Common myeloid progenitor, CD34-positive (primary cell): ENCODE measurements at regions of chr3 and their contacts with region 1.

Region 1: DNA sequence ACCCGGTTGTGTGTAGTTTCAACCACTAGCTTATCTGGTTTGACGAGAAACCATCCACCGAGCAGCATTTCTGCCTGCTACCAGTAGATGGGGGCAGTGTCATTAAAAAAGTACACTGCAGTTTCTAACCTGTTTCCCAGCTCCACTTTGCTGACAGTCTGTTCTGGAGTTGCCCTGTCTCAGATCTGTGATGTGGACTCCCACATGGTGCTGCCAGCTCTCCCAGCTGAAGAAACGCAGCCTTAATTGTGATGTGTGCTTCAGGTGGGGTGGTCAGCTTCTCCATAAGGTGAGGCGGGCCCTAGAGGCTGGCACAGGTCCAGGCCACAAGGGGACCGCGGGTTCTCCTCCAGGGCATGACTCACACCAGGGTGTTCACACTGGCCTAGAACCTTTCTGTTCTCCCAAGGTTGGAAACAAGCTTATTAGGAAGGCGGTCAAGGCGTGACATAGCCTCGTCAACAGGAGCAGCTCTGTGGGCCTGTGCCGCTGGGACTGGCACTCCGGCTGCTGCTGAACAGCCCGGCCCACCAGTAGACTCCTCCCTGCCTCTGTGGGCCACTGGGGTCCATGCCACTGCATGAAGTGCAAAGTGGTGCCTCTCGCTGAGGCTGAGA is 2.9 kb upstream of the FAM43A start:
- DNase-seq: peak; percentile 86 to 93 (median 91)
- H3K4me3 ChIP-seq: peak overlapping the region in 2 of 7 experiments; percentile 3 to 32
- H3K27ac ChIP-seq: no peak overlapping the region
- H3K4me1 ChIP-seq: peaks cover 0 to 51% (median 37%) of the 10 kb centered on the region in 4 experiments
- H3K27me3 ChIP-seq: no peaks in the 10 kb centered on the region

Region 2: DNA sequence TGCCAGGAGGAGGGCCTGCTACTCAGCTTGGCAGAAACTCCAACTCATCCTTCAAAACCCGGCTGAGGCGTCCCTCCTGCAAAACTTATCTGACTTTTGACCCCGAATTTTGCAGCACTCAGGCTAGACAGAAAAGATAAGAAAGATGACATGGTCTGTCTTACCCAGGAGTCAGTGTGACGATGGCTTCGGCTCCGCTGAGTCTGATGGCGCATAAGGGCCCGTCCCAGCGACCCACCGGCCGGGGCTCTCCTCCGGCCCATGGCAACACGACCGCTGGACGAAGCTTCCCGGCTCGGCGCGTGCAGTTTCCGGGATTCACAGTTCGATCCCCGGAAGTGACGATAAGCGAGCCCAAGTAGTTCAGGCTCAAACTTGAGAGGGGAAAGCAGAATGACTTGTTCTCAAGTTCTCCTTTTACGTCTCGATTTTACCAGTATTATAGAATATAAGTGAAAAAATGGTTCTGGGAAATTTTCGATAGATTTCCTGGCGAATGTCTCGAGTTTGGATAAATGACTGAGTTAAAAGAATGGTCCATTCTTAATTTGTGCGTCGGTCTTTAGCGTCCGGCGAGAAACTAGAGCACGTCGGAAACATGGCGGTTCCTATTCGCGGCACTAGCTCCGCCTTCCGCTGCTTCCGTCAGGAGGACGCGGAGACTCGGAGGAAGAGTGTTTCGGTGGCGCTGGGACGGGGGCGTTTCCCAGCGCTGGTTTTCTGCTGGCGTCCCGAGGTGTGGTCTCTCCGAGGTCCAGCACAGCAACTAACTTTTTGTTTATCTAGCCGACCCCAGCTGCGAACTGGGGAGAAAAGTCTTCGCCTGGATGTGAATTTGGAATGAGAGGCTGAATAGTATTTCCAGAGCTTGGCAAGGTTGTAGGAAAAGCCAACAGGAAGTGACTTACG is 10.6 kb before region 1 on chr3 and contains the start of gene LSG1:
- CTCF ChIA-PET with region 1: interaction called, 129 read pairs
- POLR2A ChIA-PET with region 1: interaction called, 11 read pairs
- DNase-seq: peak; percentile 97 to 99 (median 98)
- H3K4me3 ChIP-seq: peak within 1 kb of the TSS; percentile 79 to 100 (median 97)
- H3K27ac ChIP-seq: peak within 1 kb of the TSS; percentile 100
- H3K4me1 ChIP-seq: peaks cover 11 to 22% (median 17%) of the 10 kb centered on the region in 4 experiments
- H3K27me3 ChIP-seq: peaks cover 0 to 2% (median 0%) of the 10 kb centered on the region in 5 experiments

Region 3: GRCh38 chr3:194952841-194953241 is 270.0 kb after region 1 on chr3:
- CTCF ChIA-PET with region 1: interaction called, 54 read pairs
- POLR2A ChIA-PET with region 1: interaction called, 14 read pairs
- DNase-seq: peak; percentile 73 to 95 (median 91)
- H3K4me3 ChIP-seq: no peak overlapping the region
- H3K27ac ChIP-seq: no peak overlapping the region
- H3K4me1 ChIP-seq: peaks cover 0 to 22% (median 21%) of the 10 kb centered on the region in 4 experiments
- H3K27me3 ChIP-seq: no peaks in the 10 kb centered on the region

Region 4: GRCh38 chr3:195106418-195106906 is 423.7 kb after region 1 on chr3:
- CTCF ChIA-PET with region 1: interaction called, 20 read pairs
- POLR2A ChIA-PET with region 1: no interaction called
- DNase-seq: peak in 2 of 3 donors; percentile 71 to 75
- H3K4me3 ChIP-seq: peak overlapping the region in 3 of 7 experiments; percentile 9 to 58 (median 43)
- H3K27ac ChIP-seq: no peak overlapping the region
- H3K4me1 ChIP-seq: peaks cover 0 to 45% (median 33%) of the 10 kb centered on the region in 4 experiments
- H3K27me3 ChIP-seq: no peaks in the 10 kb centered on the region

Region 5: GRCh38 chr3:195250473-195251251 is 567.9 kb after region 1 on chr3:
- CTCF ChIA-PET with region 1: interaction called, 22 read pairs
- POLR2A ChIA-PET with region 1: no interaction called
- DNase-seq: peak; percentile 74 to 85 (median 83)
- H3K4me3 ChIP-seq: peak overlapping the region in 3 of 7 experiments; percentile 16 to 57 (median 20)
- H3K27ac ChIP-seq: no peak overlapping the region
- H3K4me1 ChIP-seq: peaks cover 4 to 35% (median 25%) of the 10 kb centered on the region in 4 experiments
- H3K27me3 ChIP-seq: no peaks in the 10 kb centered on the region

Region 6: DNA sequence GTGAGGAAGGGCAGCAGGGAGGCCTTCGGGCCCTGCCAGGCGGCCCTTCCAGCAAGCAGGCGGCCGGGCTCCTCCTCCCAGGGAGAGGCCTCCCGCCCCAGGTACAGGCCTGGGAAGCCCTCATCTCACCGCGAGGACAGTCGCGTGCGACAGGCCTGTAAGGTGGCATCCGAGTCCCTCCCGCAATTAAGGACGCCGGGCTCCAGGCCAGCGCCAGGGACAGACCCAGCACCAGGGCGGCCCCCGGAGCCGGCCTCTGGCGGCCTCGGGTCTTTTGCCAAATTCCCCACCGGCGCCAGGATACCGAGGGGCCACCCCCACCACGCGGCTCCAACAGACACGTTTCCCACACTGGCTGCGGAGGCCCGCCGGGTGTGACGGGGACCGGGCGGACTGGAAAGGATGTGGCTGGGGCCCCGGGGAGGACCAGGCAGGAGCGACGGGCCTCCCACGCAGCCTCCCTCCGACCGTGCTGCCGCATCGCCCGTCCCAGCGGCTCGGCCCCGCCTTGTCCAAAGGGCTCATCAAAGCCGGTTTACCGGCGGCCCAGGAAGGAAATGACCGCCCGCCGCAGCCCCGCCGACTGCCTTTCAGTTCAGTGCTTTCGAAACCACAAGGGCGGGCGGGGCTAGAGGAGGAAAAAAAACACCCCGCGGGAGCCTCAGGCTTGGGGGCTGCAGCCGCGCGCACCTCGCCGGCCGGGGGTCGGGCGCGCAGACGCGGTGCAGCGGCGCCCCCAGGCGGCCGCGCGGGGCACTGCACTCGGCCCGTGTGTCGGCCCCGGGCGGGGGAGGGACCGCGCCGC is 576.9 kb after region 1 on chr3:
- CTCF ChIA-PET with region 1: interaction called, 23 read pairs
- POLR2A ChIA-PET with region 1: interaction called, 5 read pairs
- DNase-seq: peak; percentile 96 to 99 (median 98)
- H3K4me3 ChIP-seq: peak overlapping the region in 4 of 7 experiments; percentile 69 to 88 (median 80)
- H3K27ac ChIP-seq: peak overlapping the region; percentile 53 to 84
- H3K4me1 ChIP-seq: peaks cover 4 to 65% (median 36%) of the 10 kb centered on the region in 4 experiments
- H3K27me3 ChIP-seq: no peaks in the 10 kb centered on the region